K562 (cell line): ENCODE measurements at regions of chr9 and their contacts with region 1.

Region 1: GRCh38 chr9:134698587-134699342 is 57.2 kb downstream of the COL5A1 start:
- DNase-seq: peak; percentile 65 to 77 (median 74)
- ATAC-seq: peak; percentile 94
- H3K4me3 ChIP-seq: no peak overlapping the region
- H3K27ac ChIP-seq: no peak overlapping the region
- H3K4me1 ChIP-seq: peaks cover 0 to 10% of the 10 kb centered on the region in 2 experiments; a peak in 2 of 5 replicates
- H3K27me3 ChIP-seq: peaks cover 12 to 52% of the 10 kb centered on the region in 2 experiments; a peak in 4 of 5 replicates
- CTCF ChIP-seq: peak; percentile 82 to 95 (median 83)
- EP300 ChIP-seq: no peak
- POLR2A ChIP-seq: no peak
- RAD21 ChIP-seq: peak; percentile 52 to 78

Region 2: GRCh38 chr9:134738869-134739659 is 40.3 kb after region 1 on chr9:
- CTCF ChIA-PET with region 1: interaction called, 3 read pairs
- POLR2A ChIA-PET with region 1: interaction called, 3 read pairs
- in situ Hi-C with region 1: no loop called
- intact Hi-C with region 1: loop called (anchors 2 kb)
- DNase-seq: peak; percentile 53 to 76 (median 68)
- ATAC-seq: peak; percentile 86
- H3K4me3 ChIP-seq: no peak overlapping the region
- H3K27ac ChIP-seq: no peak overlapping the region
- H3K4me1 ChIP-seq: no peaks in the 10 kb centered on the region
- H3K27me3 ChIP-seq: peaks cover 0 to 22% of the 10 kb centered on the region in 2 experiments; a peak in 2 of 5 replicates
- CTCF ChIP-seq: peak; percentile 72 to 73 (median 73)
- EP300 ChIP-seq: no peak
- POLR2A ChIP-seq: no peak
- RAD21 ChIP-seq: peak; percentile 26 to 70

Region 3: DNA sequence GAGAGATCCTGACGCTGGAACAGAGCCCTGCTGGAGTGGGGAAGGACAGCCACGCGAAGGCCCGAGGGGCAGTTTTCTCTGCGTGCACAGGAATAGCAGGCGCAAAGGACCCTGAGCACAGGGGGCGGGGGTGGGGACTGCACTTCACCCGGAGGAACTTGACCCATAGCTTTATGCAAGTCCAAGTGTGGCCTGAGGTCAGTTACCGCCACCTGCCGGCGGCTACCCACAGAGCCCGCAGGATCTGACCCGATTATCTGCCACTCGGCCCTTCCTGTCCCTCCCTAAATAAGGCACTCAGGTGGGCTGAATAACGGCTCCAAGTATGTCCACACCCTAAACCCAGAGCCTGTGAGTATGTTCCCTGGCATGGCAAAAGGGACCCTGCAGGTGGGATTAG is 284.3 kb after region 1 on chr9:
- CTCF ChIA-PET with region 1: interaction called, 4 read pairs
- POLR2A ChIA-PET with region 1: no interaction called
- in situ Hi-C with region 1: loop called (anchors 10 kb)
- intact Hi-C with region 1: no loop called
- DNase-seq: peak; percentile 34 to 55 (median 46)
- ATAC-seq: peak; percentile 70
- H3K4me3 ChIP-seq: no peak overlapping the region
- H3K27ac ChIP-seq: no peak overlapping the region
- H3K4me1 ChIP-seq: no peaks in the 10 kb centered on the region
- H3K27me3 ChIP-seq: peaks cover 0 to 19% of the 10 kb centered on the region in 2 experiments; a peak in 1 of 5 replicates
- CTCF ChIP-seq: peak; percentile 52 to 60 (median 60)
- EP300 ChIP-seq: no peak
- POLR2A ChIP-seq: no peak
- RAD21 ChIP-seq: peak in 1 of 2 experiments; percentile 55; a peak in 2 of 4 replicates

Region 4: DNA sequence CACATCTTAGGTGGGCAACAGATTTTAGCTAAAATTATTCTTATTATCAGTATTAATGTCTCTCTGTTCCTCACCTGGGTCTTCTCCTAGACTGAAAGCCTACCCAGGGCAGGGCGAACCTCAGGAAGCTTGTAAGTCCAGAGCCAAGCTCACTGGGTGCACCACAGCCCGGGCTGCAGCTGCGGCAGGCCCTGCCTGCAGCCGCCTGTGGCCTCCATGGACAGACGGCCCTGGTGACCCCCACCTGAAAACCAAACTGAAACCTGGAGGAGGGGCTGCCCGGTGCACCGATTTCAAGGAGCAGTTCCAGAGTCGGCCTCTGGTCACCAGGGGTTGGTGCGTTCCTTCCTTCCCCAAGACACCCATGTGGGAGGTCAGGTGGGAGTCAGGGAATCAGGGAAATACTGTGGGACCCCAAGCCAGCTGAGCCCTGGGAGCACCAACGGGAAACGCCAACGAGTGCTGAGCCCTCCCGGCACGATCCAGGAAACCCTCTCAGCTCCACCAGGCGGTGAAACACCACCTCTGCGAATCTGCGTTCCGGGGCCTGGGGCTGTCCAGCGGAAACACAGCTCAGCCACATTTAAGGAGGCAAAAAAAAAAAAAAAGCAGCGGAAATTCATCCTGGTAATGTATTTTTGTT is 712.2 kb after region 1 on chr9:
- CTCF ChIA-PET with region 1: no interaction called
- POLR2A ChIA-PET with region 1: no interaction called
- in situ Hi-C with region 1: no loop called
- intact Hi-C with region 1: loop called (anchors 10 kb)
- DNase-seq: no peak
- ATAC-seq: no peak
- H3K4me3 ChIP-seq: no peak overlapping the region
- H3K27ac ChIP-seq: no peak overlapping the region
- H3K4me1 ChIP-seq: peaks cover 4 to 26% of the 10 kb centered on the region in 2 experiments; a peak in 1 of 5 replicates
- H3K27me3 ChIP-seq: peaks cover 3 to 34% of the 10 kb centered on the region in 2 experiments; a peak in 4 of 5 replicates
- CTCF ChIP-seq: 0 out of 6 replicates have a peak, but pooled peaks of 1 of the 3 experiments have one; percentile 18
- EP300 ChIP-seq: no peak
- POLR2A ChIP-seq: no peak
- RAD21 ChIP-seq: no peak